HepG2 (cell line): ENCODE measurements at regions of chr17 and their contacts with region 1.

Region 1: GRCh38 chr17:82292251-82293154 is 19.0 kb upstream of the CSNK1D start:
- DNase-seq: peak; percentile 99
- ATAC-seq: peak; percentile 89
- H3K4me3 ChIP-seq: peak overlapping the region; percentile 80 to 87 (median 81)
- H3K27ac ChIP-seq: peak overlapping the region; percentile 93
- H3K4me1 ChIP-seq: peaks cover 88% of the 10 kb centered on the region
- H3K27me3 ChIP-seq: no peaks in the 10 kb centered on the region
- CTCF ChIP-seq: no peak
- EP300 ChIP-seq: peak; percentile 51 to 70
- POLR2A ChIP-seq: peak; percentile 99 to 100
- RAD21 ChIP-seq: peak; percentile 43

Region 2: GRCh38 chr17:82267575-82268379 is 24.7 kb before region 1 on chr17:
- CTCF ChIA-PET with region 1: no interaction called
- POLR2A ChIA-PET with region 1: interaction called, 119 read pairs
- in situ Hi-C with region 1: no loop called
- intact Hi-C with region 1: loop called (anchors 2 kb)
- DNase-seq: peak; percentile 99
- ATAC-seq: peak; percentile 88
- H3K4me3 ChIP-seq: peak overlapping the region; percentile 12 to 65 (median 48); a peak in 5 of 6 replicates
- H3K27ac ChIP-seq: peak overlapping the region; percentile 90
- H3K4me1 ChIP-seq: peaks cover 70% of the 10 kb centered on the region
- H3K27me3 ChIP-seq: no peaks in the 10 kb centered on the region; a peak in 1 of 5 replicates
- CTCF ChIP-seq: peak; percentile 46
- EP300 ChIP-seq: peak; percentile 84 to 90
- POLR2A ChIP-seq: peak in 1 of 2 experiments; percentile 44; a peak in 3 of 4 replicates
- RAD21 ChIP-seq: peak; percentile 44

Region 3: DNA sequence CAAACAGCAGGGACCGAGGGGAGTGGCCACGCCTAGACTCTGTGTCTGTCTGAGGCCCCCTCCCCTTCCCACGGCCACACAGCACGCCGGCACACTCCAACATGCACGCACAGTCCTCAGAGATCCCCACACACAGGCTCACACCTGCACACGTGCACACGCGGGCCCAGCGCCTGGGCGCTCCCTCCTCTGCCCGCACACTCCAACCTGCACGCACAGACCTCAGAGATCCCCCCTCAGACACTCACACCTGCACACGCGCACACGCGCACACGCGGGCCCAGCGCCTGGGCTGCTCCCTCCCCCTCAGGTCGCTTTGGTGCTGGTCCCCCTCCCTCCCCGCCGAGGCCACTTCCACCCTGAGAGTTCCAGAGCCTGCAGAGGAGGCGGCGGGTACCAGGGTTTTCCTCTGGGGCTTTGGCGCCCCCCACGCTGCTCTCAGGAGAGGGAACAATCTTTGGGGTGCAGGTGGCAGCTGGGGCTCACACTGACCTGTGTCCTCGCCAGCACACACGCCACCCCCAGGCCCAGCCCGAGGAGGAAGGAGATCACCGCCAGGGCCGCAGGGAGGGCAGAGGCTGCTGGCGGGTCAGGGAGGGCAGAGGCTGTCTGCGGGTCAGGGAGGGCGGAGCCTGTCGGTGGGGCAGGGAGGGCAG is 23.3 kb after region 1 on chr17:
- CTCF ChIA-PET with region 1: no interaction called
- POLR2A ChIA-PET with region 1: interaction called, 270 read pairs
- in situ Hi-C with region 1: no loop called
- intact Hi-C with region 1: no loop called
- DNase-seq: no peak
- ATAC-seq: peak; percentile 3; the same call in 1 of the 3 replicates
- H3K4me3 ChIP-seq: peak overlapping the region in 2 of 3 experiments; percentile 69 to 72; a peak in 3 of 6 replicates
- H3K27ac ChIP-seq: no peak overlapping the region
- H3K4me1 ChIP-seq: peaks cover 56% of the 10 kb centered on the region
- H3K27me3 ChIP-seq: no peaks in the 10 kb centered on the region; a peak in 1 of 5 replicates
- CTCF ChIP-seq: peak; percentile 53
- EP300 ChIP-seq: no peak
- POLR2A ChIP-seq: no peak
- RAD21 ChIP-seq: no peak

Region 4: GRCh38 chr17:82332669-82333278 is 40.3 kb after region 1 on chr17:
- CTCF ChIA-PET with region 1: no interaction called
- POLR2A ChIA-PET with region 1: interaction called, 270 read pairs
- in situ Hi-C with region 1: no loop called
- intact Hi-C with region 1: no loop called
- DNase-seq: no peak
- ATAC-seq: peak; percentile 15
- H3K4me3 ChIP-seq: peak overlapping the region in 2 of 3 experiments; percentile 31 to 35; a peak in 4 of 6 replicates
- H3K27ac ChIP-seq: peak overlapping the region; percentile 9
- H3K4me1 ChIP-seq: peaks cover 90% of the 10 kb centered on the region
- H3K27me3 ChIP-seq: no peaks in the 10 kb centered on the region
- CTCF ChIP-seq: peak; percentile 43
- EP300 ChIP-seq: no peak
- POLR2A ChIP-seq: no peak
- RAD21 ChIP-seq: peak; percentile 42; the same call in 1 of the 2 replicates